Activated CD4-positive, alpha-beta T cell treated with anti-CD3 and anti-CD28 coated beads, Interleukin-2, amount 10 ng/mL, durations not matched to agents 24 days and 14 days (primary cell): ENCODE measurements at regions of chr4 and their contacts with region 1.

Region 1: DNA sequence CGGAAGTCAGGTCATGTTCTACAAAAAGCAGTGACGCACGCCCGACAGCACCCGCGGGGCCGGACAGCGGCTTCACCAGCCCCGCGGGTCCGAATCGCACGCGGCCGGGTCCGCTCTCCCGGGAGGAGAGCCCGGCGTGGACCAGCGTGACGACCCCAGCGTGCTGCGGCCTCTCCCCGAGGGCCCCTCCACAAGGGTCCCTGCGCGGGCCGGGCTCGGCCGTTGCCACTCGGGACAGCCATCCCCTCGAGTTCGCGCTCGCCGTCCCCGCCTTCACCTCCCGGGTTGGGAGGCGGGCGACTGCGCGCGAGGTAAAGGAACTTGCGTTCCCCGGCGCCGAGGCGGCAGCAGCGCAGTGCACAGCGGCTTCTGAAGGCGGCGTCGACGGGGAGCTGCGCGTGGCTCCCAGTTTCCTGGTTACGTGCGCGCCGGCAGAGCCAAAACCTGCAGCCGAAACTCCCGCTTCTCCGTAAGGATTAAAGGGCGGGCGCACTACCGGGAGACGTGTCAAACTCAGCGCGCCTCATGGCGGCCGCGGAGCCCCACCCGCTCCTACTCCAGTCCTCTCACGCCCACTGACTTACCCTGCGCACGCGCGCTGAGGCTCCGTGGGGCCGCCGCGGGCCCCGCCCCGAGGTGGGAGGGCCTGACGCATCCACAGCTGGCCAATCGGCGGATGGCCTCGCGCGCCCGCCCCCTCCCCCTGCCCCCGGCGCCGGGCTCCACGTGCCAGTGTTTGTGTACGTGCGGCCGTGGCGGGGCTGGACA is 416 bp upstream of the LRP2BP start:
- DNase-seq: peak; percentile 100
- H3K4me3 Mint-ChIP-seq: peak overlapping the region; percentile 87
- H3K27ac Mint-ChIP-seq: peak overlapping the region; percentile 96
- H3K4me1 Mint-ChIP-seq: peaks cover 48% of the 10 kb centered on the region
- H3K27me3 Mint-ChIP-seq: no peaks in the 10 kb centered on the region

Region 2: DNA sequence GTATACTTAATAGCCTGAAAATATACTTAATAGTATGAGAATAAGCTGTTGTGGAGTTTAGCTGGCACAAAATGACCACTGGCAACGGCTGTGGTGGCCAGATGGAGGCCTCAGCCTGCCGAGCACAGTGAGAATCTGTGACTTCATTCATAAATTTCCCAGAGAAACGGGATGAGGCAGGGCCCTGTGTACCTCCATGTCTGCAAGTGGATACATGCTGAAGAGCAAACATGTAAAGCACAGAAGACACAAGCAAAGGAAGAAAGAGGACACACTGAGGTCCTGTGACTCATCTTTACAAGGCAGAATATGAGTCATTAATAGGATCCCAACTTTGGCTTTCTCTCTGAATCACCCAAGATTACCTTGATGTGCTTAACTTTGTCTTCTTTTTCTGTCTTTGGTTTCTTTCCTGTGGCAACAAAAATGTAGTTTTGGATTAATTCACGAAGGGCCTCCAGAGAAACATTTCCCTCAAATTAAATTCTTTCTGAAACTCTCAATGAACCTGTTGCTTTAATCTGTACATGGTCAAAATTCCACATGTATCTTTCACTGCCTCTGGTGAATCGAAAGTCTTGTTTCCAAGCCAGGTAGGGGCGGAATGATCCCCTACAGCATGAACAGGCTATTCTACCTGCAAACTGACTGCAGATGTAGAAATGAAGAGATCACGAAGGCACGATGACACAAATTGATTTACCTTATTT is 978.2 kb before region 1 on chr4:
- intact Hi-C with region 1: loop called (anchors 5 kb)
- DNase-seq: peak; percentile 77
- H3K4me3 Mint-ChIP-seq: peak overlapping the region; percentile 56
- H3K27ac Mint-ChIP-seq: peak overlapping the region; percentile 86
- H3K4me1 Mint-ChIP-seq: peaks cover 68% of the 10 kb centered on the region
- H3K27me3 Mint-ChIP-seq: no peaks in the 10 kb centered on the region

Region 3: GRCh38 chr4:185203486-185204237 is 192.5 kb before region 1 on chr4 and contains the start of gene CFAP97:
- intact Hi-C with region 1: loop called (anchors 1 kb)
- DNase-seq: peak; percentile 95
- H3K4me3 Mint-ChIP-seq: peak within 1 kb of the TSS; percentile 97
- H3K27ac Mint-ChIP-seq: peak within 1 kb of the TSS; percentile 99
- H3K4me1 Mint-ChIP-seq: peaks cover 36% of the 10 kb centered on the region
- H3K27me3 Mint-ChIP-seq: no peaks in the 10 kb centered on the region
- total RNA-seq, gene CFAP97: 56.6 and 59.3 TPM in 2 replicates

Region 4: GRCh38 chr4:185343726-185344581 is 52.2 kb before region 1 on chr4:
- intact Hi-C with region 1: loop called (anchors 2 kb)
- DNase-seq: no peak
- H3K4me3 Mint-ChIP-seq: peak overlapping the region; percentile 50
- H3K27ac Mint-ChIP-seq: peak overlapping the region; percentile 90
- H3K4me1 Mint-ChIP-seq: peaks cover 43% of the 10 kb centered on the region
- H3K27me3 Mint-ChIP-seq: no peaks in the 10 kb centered on the region

Region 5: GRCh38 chr4:185437809-185438208 is 41.7 kb after region 1 on chr4:
- intact Hi-C with region 1: no loop called
- DNase-seq: no peak
- H3K4me3 Mint-ChIP-seq: no peak overlapping the region
- H3K27ac Mint-ChIP-seq: no peak overlapping the region
- H3K4me1 Mint-ChIP-seq: no peaks in the 10 kb centered on the region
- H3K27me3 Mint-ChIP-seq: peaks cover 11% of the 10 kb centered on the region

Region 6: GRCh38 chr4:185471235-185472102 is 75.3 kb after region 1 on chr4 and contains the start of gene CCDC110:
- intact Hi-C with region 1: loop called (anchors 1 kb)
- DNase-seq: peak; percentile 95
- H3K4me3 Mint-ChIP-seq: peak within 1 kb of the TSS; percentile 83
- H3K27ac Mint-ChIP-seq: no peak within 1 kb of the TSS
- H3K4me1 Mint-ChIP-seq: peaks cover 8% of the 10 kb centered on the region
- H3K27me3 Mint-ChIP-seq: peaks cover 49% of the 10 kb centered on the region
- total RNA-seq, gene CCDC110: not detected in 2 replicates